PC-9 (cell line): ENCODE measurements at regions of chr1 and their contacts with region 1.

Region 1: GRCh38 chr1:91021686-91022517 is at the start of gene ZNF644:
- DNase-seq: peak; percentile 85 to 92
- H3K4me3 ChIP-seq: peak within 1 kb of the TSS; percentile 74
- H3K27ac ChIP-seq: peak within 1 kb of the TSS; percentile 98
- H3K4me1 ChIP-seq: peaks cover 50% of the 10 kb centered on the region
- H3K27me3 ChIP-seq: no peaks in the 10 kb centered on the region
- CTCF ChIP-seq: no peak
- total RNA-seq, gene ZNF644: 36.5 and 37.9 TPM in 2 replicates

Region 2: GRCh38 chr1:90973897-90974798 is 47.8 kb before region 1 on chr1:
- CTCF ChIA-PET with region 1: no interaction called
- POLR2A ChIA-PET with region 1: interaction called, 18 read pairs
- intact Hi-C with region 1: no loop called
- DNase-seq: no peak
- H3K4me3 ChIP-seq: no peak overlapping the region
- H3K27ac ChIP-seq: peak overlapping the region; percentile 11
- H3K4me1 ChIP-seq: peaks cover 9% of the 10 kb centered on the region
- H3K27me3 ChIP-seq: no peaks in the 10 kb centered on the region
- CTCF ChIP-seq: no peak

Region 3: DNA sequence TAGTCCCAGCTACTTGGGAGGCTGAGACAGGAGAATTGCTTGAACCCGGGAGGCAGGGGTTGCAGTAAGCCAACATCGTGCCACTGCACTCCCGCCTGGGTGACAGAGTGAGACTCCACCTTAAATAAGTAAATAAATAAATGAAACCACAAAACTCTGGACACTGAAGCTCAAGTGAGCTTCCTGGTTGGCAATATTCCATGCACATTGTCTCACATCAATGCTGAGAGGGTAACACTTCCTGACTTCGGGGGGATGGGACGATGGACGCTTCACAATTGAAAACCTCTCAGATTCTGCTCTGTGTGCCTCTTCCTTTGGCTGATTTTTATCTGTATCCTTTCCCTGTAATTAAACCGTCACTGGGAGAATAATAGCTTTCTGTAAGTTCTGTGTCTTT is 69.9 kb after region 1 on chr1:
- CTCF ChIA-PET with region 1: no interaction called
- POLR2A ChIA-PET with region 1: interaction called, 5 read pairs
- intact Hi-C with region 1: loop called (anchors 5 kb)
- DNase-seq: peak; percentile 38 to 96
- H3K4me3 ChIP-seq: peak overlapping the region; percentile 38; the same call in 1 of the 2 replicates
- H3K27ac ChIP-seq: peak overlapping the region; percentile 95
- H3K4me1 ChIP-seq: peaks cover 33% of the 10 kb centered on the region
- H3K27me3 ChIP-seq: no peaks in the 10 kb centered on the region
- CTCF ChIP-seq: no peak

Region 4: GRCh38 chr1:91189096-91189495 is 167.2 kb after region 1 on chr1:
- CTCF ChIA-PET with region 1: no interaction called
- POLR2A ChIA-PET with region 1: no interaction called
- intact Hi-C with region 1: no loop called
- DNase-seq: no peak
- H3K4me3 ChIP-seq: no peak overlapping the region
- H3K27ac ChIP-seq: no peak overlapping the region
- H3K4me1 ChIP-seq: no peaks in the 10 kb centered on the region
- H3K27me3 ChIP-seq: peaks cover 15% of the 10 kb centered on the region; the same call in 1 of the 2 replicates
- CTCF ChIP-seq: no peak